ENCODE measurements at regions of chr3 and their contacts with region 1.

Region 1: DNA sequence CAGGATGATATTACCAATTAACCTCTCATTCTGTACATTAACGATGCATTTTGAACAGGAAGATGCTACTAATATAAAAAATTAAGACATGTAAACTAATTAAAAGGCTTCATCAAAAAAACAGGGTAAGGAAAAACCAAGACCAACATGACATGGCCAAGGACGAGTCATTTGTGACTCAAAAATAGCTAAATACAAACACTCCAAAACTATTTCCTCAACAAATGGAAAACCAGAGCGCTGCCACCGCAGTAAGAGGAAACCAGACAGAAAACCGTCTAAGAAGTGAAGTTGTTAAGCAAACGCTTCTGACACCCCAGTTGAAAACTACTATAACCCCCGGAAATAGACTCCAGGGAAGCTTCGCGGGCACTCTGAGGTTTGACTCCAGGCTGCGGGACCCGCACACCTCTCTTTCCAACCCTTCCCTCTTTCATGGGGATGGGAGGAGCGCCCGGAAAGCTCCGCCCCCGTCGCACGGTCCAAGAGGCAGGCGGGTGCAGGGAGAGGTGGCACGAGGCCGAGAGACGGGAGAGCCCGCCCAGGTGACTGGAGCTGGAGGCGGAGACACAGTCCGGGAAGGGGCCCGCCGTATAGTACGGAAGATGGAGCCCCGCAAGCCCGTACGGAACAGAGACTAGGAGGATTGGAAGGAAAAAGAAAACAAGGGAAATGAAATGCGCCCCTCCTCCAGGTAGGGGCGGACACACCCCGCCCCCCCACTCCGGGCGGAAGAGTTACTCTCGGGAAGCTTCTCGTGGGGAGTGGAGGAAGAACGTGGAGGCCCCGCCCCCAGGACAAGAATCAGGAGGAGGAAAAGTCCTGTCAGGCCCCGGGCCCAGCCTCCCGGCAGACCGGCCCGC is 708 bp downstream of the DCAF1 start:
- DNase-seq: peak; percentile 96 to 97
- H3K4me3 ChIP-seq: peak overlapping the region; percentile 50
- H3K4me3 Mint-ChIP-seq: peak overlapping the region; percentile 93
- H3K27ac Mint-ChIP-seq: peak overlapping the region; percentile 97
- H3K4me1 ChIP-seq: no peaks in the 10 kb centered on the region
- H3K4me1 Mint-ChIP-seq: peaks cover 8% of the 10 kb centered on the region
- H3K27me3 ChIP-seq: no peaks in the 10 kb centered on the region
- H3K27me3 Mint-ChIP-seq: no peaks in the 10 kb centered on the region
- CTCF ChIP-seq: no peak

Region 2: GRCh38 chr3:51384726-51385473 is 114.2 kb before region 1 on chr3 and contains the start of gene MANF:
- CTCF ChIA-PET with region 1: interaction called, 21 read pairs
- POLR2A ChIA-PET with region 1: interaction called, 13 read pairs
- intact Hi-C with region 1: loop called (anchors 1 kb)
- DNase-seq: peak; percentile 97
- H3K4me3 ChIP-seq: peak within 1 kb of the TSS; percentile 94
- H3K4me3 Mint-ChIP-seq: peak within 1 kb of the TSS; percentile 96
- H3K27ac Mint-ChIP-seq: peak within 1 kb of the TSS; percentile 93
- H3K4me1 ChIP-seq: peaks cover 43% of the 10 kb centered on the region
- H3K4me1 Mint-ChIP-seq: peaks cover 23% of the 10 kb centered on the region
- H3K27me3 ChIP-seq: no peaks in the 10 kb centered on the region
- H3K27me3 Mint-ChIP-seq: no peaks in the 10 kb centered on the region
- CTCF ChIP-seq: no peak
- total RNA-seq, gene MANF: 94.5 and 102 TPM in 2 replicates

Region 3: GRCh38 chr3:51511000-51511399 is 11.9 kb after region 1 on chr3:
- CTCF ChIA-PET with region 1: interaction called, 9 read pairs
- POLR2A ChIA-PET with region 1: interaction called, 17 read pairs
- intact Hi-C with region 1: loop called (anchors 1 kb)
- DNase-seq: peak; percentile 74 to 84
- H3K4me3 ChIP-seq: no peak overlapping the region
- H3K4me3 Mint-ChIP-seq: no peak overlapping the region
- H3K27ac Mint-ChIP-seq: peak overlapping the region; percentile 76
- H3K4me1 ChIP-seq: peaks cover 23% of the 10 kb centered on the region
- H3K4me1 Mint-ChIP-seq: peaks cover 15% of the 10 kb centered on the region
- H3K27me3 ChIP-seq: no peaks in the 10 kb centered on the region
- H3K27me3 Mint-ChIP-seq: no peaks in the 10 kb centered on the region
- CTCF ChIP-seq: no peak

Region 4: DNA sequence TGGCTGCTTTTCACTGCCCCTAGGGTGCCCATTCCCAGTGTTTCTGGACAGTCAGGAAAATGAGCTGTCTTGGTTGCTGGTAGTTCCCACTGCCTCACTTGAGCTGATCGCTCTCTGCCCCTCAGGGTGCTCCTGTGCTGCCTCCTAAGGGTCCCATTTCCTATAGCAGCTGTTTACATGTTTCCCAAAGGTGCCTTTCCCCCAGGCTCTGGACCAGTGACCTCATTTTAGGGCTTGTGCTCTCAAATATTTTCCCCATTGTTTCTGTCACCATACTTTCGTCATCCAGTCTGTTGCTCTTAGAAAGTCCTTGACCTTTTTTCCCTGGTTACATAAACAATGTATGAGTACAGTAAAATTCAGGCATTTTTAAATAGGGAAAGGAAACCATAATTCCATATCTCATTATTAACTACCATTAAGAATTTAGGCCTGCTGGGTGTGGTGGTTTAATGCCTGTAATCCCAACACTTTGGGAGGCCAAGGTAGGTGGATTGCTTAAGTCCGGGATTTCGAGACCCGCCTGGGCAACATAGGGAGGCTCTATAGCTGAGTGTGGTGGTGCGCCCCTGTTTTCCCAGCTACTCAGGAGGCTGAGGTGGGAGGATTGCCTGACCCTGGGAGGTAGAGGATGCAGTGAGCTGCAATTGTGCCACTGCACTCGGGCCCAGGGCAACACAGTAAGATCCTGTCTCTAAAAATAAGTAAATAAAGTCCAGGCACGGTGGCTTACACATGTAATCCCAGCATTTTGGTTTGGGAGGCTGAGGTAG is 51.1 kb after region 1 on chr3:
- CTCF ChIA-PET with region 1: interaction called, 8 read pairs
- POLR2A ChIA-PET with region 1: interaction called, 4 read pairs
- intact Hi-C with region 1: loop called (anchors 1 kb)
- DNase-seq: peak in 1 of 2 experiments; percentile 11
- H3K4me3 ChIP-seq: no peak overlapping the region
- H3K4me3 Mint-ChIP-seq: no peak overlapping the region
- H3K27ac Mint-ChIP-seq: peak overlapping the region; percentile 19
- H3K4me1 ChIP-seq: no peaks in the 10 kb centered on the region
- H3K4me1 Mint-ChIP-seq: no peaks in the 10 kb centered on the region
- H3K27me3 ChIP-seq: no peaks in the 10 kb centered on the region
- H3K27me3 Mint-ChIP-seq: no peaks in the 10 kb centered on the region
- CTCF ChIP-seq: peak in 1 of 2 experiments; percentile 5

Region 5: GRCh38 chr3:51670823-51671733 is 172.0 kb after region 1 on chr3 and contains the start of gene TEX264:
- CTCF ChIA-PET with region 1: interaction called, 26 read pairs
- POLR2A ChIA-PET with region 1: interaction called, 27 read pairs
- intact Hi-C with region 1: loop called (anchors 1 kb)
- DNase-seq: peak; percentile 70 to 81
- H3K4me3 ChIP-seq: peak within 1 kb of the TSS; percentile 70
- H3K4me3 Mint-ChIP-seq: peak within 1 kb of the TSS; percentile 94
- H3K27ac Mint-ChIP-seq: peak within 1 kb of the TSS; percentile 88
- H3K4me1 ChIP-seq: no peaks in the 10 kb centered on the region
- H3K4me1 Mint-ChIP-seq: peaks cover 32% of the 10 kb centered on the region
- H3K27me3 ChIP-seq: no peaks in the 10 kb centered on the region
- H3K27me3 Mint-ChIP-seq: no peaks in the 10 kb centered on the region
- CTCF ChIP-seq: no peak
- total RNA-seq, gene TEX264: 32.4 and 37.9 TPM in 2 replicates

Region 6: DNA sequence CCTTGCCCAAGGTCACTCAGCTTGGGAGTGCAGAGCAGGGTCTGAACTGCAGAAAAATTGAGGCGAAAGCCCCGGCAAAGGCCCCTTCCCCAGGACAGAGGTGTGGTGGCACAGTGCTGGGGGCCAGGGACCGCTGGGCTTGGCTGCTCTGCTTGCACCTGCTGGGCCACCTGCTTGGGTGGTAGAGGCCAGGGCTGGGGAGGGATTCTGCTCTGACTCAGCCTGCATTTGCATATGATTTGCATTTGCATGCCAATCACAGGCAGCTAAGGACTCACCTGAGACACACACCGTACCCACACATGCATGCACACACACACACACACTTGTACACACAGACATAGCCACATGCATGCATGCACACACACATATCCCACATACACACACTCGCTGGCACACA is 217.7 kb after region 1 on chr3:
- CTCF ChIA-PET with region 1: no interaction called
- POLR2A ChIA-PET with region 1: interaction called, 15 read pairs
- intact Hi-C with region 1: no loop called
- DNase-seq: no peak
- H3K4me3 ChIP-seq: no peak overlapping the region
- H3K4me3 Mint-ChIP-seq: no peak overlapping the region
- H3K27ac Mint-ChIP-seq: no peak overlapping the region
- H3K4me1 ChIP-seq: no peaks in the 10 kb centered on the region
- H3K4me1 Mint-ChIP-seq: no peaks in the 10 kb centered on the region
- H3K27me3 ChIP-seq: no peaks in the 10 kb centered on the region; the same call in 1 of the 2 replicates
- H3K27me3 Mint-ChIP-seq: peaks cover 23% of the 10 kb centered on the region
- CTCF ChIP-seq: no peak

Measured in Caco-2 (cell line).